CD4-positive, alpha-beta T cell (primary cell): ENCODE measurements at regions of chr15 and their contacts with region 1.

Region 1: GRCh38 chr15:55649054-55649423 is 60.9 kb upstream of the PYGO1 start:
- DNase-seq: no peak
- ATAC-seq: no peak
- H3K4me3 ChIP-seq: no peak overlapping the region
- H3K4me3 Mint-ChIP-seq: no peak overlapping the region
- H3K27ac ChIP-seq: no peak overlapping the region
- H3K27ac Mint-ChIP-seq: no peak overlapping the region
- H3K4me1 ChIP-seq: no peaks in the 10 kb centered on the region
- H3K4me1 Mint-ChIP-seq: no peaks in the 10 kb centered on the region
- H3K27me3 ChIP-seq: no peaks in the 10 kb centered on the region
- H3K27me3 Mint-ChIP-seq: no peaks in the 10 kb centered on the region
- CTCF ChIP-seq: no peak

Region 2: DNA sequence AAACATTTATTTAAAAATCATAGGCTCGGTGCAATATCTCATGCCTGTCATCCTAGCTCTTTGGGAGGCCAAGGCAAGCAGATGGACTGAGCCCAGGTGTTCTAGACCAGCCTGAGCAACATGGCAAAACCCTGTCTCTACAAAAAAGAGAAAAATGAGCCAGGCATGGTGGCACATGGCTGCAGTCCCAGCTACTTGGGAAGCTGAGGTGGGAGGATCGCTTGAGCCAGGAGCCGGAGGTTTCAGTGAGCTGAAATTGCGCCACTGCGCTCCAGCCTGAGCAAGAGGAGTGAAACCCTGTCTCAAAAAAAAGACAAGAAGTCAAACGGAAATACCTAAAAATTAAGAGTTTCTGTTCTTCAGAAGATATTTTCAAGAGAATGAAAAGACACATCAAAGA is 574.6 kb before region 1 on chr15:
- CTCF ChIA-PET with region 1: no interaction called
- POLR2A ChIA-PET with region 1: no interaction called
- intact Hi-C with region 1: no loop called
- DNase-seq: no peak
- ATAC-seq: no peak
- H3K4me3 ChIP-seq: no peak overlapping the region
- H3K4me3 Mint-ChIP-seq: no peak overlapping the region
- H3K27ac ChIP-seq: no peak overlapping the region
- H3K27ac Mint-ChIP-seq: no peak overlapping the region
- H3K4me1 ChIP-seq: no peaks in the 10 kb centered on the region
- H3K4me1 Mint-ChIP-seq: peaks cover 10% of the 10 kb centered on the region
- H3K27me3 ChIP-seq: no peaks in the 10 kb centered on the region
- H3K27me3 Mint-ChIP-seq: no peaks in the 10 kb centered on the region
- CTCF ChIP-seq: no peak

Region 3: DNA sequence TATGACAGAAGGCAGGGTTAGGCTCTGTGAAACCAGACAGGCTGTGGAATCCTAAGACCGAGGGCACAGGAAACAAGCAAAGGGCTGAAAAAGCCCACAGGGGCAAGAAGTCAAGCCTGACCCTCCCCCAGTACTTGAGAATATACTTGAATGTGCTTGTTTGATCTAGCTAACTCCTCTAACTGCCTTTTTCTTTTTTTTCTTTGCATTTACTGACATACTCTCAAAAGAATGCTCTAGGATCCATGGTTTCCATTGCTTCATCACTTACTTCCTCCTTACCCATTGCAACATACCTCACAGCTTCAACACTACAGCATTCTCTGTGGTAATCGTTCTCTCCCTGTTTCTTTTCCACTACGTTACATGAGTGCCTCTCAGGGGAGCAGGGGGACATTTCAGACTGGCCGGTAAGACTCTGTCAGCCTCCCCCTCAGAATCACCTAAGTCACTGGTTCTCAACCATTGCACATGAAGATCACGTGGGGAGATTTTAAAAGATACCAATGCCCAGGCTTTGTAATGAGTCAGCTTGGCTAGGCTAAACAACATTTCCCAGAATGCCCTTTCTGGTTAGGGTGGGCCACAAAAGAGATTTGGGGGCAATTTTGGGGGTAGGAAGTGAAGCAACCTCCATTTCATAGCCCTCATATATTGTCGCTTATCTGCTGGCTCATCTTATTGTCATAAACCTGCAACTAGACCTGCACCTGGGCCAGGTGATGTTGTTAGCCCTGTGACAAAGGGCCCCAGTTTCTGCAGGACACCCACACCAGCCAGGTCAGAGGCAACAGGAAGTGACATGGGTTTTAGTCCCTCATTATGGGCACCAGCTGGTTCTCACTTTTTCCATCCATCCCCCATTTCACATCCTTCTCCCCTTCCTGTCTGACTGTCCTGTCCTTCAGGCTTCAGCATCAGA is 427.7 kb before region 1 on chr15:
- CTCF ChIA-PET with region 1: no interaction called
- POLR2A ChIA-PET with region 1: no interaction called
- intact Hi-C with region 1: loop called in 1 of 2 experiments (anchors 5 kb)
- DNase-seq: peak in 3 of 14 experiments; percentile 41 to 49 (median 48)
- ATAC-seq: no peak
- H3K4me3 ChIP-seq: no peak overlapping the region
- H3K4me3 Mint-ChIP-seq: no peak overlapping the region
- H3K27ac ChIP-seq: no peak overlapping the region
- H3K27ac Mint-ChIP-seq: peak overlapping the region; percentile 18
- H3K4me1 ChIP-seq: peaks cover 47% of the 10 kb centered on the region
- H3K4me1 Mint-ChIP-seq: peaks cover 66% of the 10 kb centered on the region
- H3K27me3 ChIP-seq: no peaks in the 10 kb centered on the region
- H3K27me3 Mint-ChIP-seq: no peaks in the 10 kb centered on the region
- CTCF ChIP-seq: no peak

Region 4: DNA sequence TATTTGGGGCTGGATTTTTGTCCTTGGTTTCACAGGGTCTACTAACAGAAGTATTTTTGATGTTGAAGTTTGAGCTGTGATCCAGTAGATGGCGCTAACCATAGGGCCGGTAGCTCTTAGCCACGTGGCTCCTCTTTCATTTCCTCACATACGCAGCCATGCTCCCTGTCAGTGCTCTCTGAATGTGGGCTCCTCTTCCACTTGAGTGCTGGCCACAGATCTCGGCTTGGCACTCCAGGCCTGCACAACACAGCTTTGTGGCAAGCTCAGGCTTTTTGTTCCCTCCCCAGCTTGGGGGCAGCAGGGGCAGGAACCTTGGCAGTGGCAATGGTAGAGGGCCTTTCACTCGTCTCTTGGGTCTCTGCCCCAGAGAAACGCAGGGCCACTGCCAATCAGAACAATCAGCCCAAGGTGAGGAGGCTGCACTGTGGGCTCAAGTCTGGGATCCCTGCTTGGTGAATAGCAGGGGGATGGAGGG is 122.4 kb before region 1 on chr15:
- CTCF ChIA-PET with region 1: no interaction called
- POLR2A ChIA-PET with region 1: no interaction called
- intact Hi-C with region 1: loop called in 1 of 2 experiments (anchors 5 kb)
- DNase-seq: peak in 3 of 14 experiments; percentile 36 to 56 (median 50)
- ATAC-seq: peak; percentile 62
- H3K4me3 ChIP-seq: no peak overlapping the region
- H3K4me3 Mint-ChIP-seq: no peak overlapping the region
- H3K27ac ChIP-seq: no peak overlapping the region
- H3K27ac Mint-ChIP-seq: no peak overlapping the region
- H3K4me1 ChIP-seq: peaks cover 3% of the 10 kb centered on the region
- H3K4me1 Mint-ChIP-seq: no peaks in the 10 kb centered on the region
- H3K27me3 ChIP-seq: peaks cover 0 to 7% of the 10 kb centered on the region in 2 experiments
- H3K27me3 Mint-ChIP-seq: peaks cover 40% of the 10 kb centered on the region
- CTCF ChIP-seq: peak; percentile 9

Region 5: DNA sequence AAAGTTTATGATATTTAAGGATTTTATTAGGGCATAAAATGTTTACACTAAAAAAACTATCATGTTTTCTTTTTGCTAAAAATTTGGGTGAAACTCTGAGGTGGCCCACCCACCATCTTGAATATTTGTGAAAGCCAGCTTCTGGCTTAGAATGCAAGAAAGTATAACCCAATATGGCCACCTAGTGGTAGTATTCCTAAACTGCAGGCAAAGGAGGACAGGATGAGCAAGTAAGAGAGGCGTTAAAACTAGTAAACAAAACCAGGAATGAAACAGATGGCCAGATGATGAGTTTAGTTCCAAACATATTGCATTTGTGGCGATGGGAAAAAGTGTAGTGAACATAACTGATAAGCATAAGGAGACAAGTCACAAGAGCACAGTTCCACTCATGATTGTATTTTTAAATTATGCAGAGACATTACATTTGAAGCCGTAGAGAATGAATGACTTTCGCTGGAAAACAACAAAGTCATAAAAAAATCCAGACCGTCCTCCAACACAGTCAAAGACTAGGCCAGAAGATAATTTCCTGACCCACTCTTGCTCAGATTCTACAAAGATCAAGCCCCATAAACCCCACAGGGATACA is 197.2 kb after region 1 on chr15:
- CTCF ChIA-PET with region 1: no interaction called
- POLR2A ChIA-PET with region 1: no interaction called
- intact Hi-C with region 1: loop called (anchors 1 to 5 kb)
- DNase-seq: peak in 9 of 14 experiments; percentile 2 to 75 (median 20)
- ATAC-seq: peak; percentile 73
- H3K4me3 ChIP-seq: no peak overlapping the region
- H3K4me3 Mint-ChIP-seq: no peak overlapping the region
- H3K27ac ChIP-seq: no peak overlapping the region
- H3K27ac Mint-ChIP-seq: no peak overlapping the region
- H3K4me1 ChIP-seq: no peaks in the 10 kb centered on the region
- H3K4me1 Mint-ChIP-seq: no peaks in the 10 kb centered on the region
- H3K27me3 ChIP-seq: no peaks in the 10 kb centered on the region
- H3K27me3 Mint-ChIP-seq: no peaks in the 10 kb centered on the region
- CTCF ChIP-seq: peak; percentile 76

Region 6: DNA sequence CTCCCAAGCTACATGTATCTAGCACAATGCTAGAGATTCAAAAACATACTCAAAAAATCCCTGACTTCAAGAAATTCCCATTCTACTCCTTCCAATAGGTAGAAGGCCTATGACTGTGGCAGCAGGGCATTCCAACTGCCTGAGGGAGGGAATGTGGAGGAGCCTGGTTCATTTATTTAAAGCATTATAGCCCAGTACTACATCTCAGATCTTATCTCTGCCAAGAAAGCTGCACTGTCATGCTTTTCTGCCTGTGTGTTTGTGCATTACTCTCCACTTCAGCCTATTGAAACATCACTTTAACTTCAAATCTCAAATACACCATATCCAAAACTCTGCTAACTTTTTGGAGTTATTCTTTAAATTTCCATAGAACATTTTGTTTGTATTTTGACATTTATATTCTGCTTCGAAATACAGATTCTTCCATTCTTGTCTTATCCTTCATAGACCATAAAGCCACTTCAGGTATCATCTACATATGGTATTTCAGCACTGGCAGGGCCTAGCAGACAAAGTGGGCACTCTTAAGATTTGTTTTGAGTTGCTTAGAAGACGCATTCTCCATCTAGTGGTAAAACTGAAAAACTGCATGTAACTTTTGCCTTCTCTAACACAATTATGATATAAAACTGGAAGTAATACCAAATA is 403.5 kb after region 1 on chr15:
- CTCF ChIA-PET with region 1: no interaction called
- POLR2A ChIA-PET with region 1: no interaction called
- intact Hi-C with region 1: loop called (anchors 1 kb)
- DNase-seq: peak in 4 of 14 experiments; percentile 13 to 68 (median 58)
- ATAC-seq: peak; percentile 79
- H3K4me3 ChIP-seq: no peak overlapping the region
- H3K4me3 Mint-ChIP-seq: no peak overlapping the region
- H3K27ac ChIP-seq: no peak overlapping the region
- H3K27ac Mint-ChIP-seq: no peak overlapping the region
- H3K4me1 ChIP-seq: no peaks in the 10 kb centered on the region
- H3K4me1 Mint-ChIP-seq: no peaks in the 10 kb centered on the region
- H3K27me3 ChIP-seq: no peaks in the 10 kb centered on the region
- H3K27me3 Mint-ChIP-seq: no peaks in the 10 kb centered on the region
- CTCF ChIP-seq: peak; percentile 76

Region 7: GRCh38 chr15:56428821-56429458 is 779.9 kb after region 1 on chr15:
- CTCF ChIA-PET with region 1: no interaction called
- POLR2A ChIA-PET with region 1: no interaction called
- intact Hi-C with region 1: loop called (anchors 2 kb)
- DNase-seq: peak in 3 of 14 experiments; percentile 10 to 15 (median 11)
- ATAC-seq: no peak
- H3K4me3 ChIP-seq: no peak overlapping the region
- H3K4me3 Mint-ChIP-seq: no peak overlapping the region
- H3K27ac ChIP-seq: no peak overlapping the region
- H3K27ac Mint-ChIP-seq: no peak overlapping the region
- H3K4me1 ChIP-seq: no peaks in the 10 kb centered on the region
- H3K4me1 Mint-ChIP-seq: no peaks in the 10 kb centered on the region
- H3K27me3 ChIP-seq: peaks cover 0 to 8% of the 10 kb centered on the region in 2 experiments
- H3K27me3 Mint-ChIP-seq: peaks cover 5% of the 10 kb centered on the region
- CTCF ChIP-seq: peak; percentile 50